Astrocyte of the cerebellum (primary cell): ENCODE measurements at regions of chr17 and their contacts with region 1.

Region 1: DNA sequence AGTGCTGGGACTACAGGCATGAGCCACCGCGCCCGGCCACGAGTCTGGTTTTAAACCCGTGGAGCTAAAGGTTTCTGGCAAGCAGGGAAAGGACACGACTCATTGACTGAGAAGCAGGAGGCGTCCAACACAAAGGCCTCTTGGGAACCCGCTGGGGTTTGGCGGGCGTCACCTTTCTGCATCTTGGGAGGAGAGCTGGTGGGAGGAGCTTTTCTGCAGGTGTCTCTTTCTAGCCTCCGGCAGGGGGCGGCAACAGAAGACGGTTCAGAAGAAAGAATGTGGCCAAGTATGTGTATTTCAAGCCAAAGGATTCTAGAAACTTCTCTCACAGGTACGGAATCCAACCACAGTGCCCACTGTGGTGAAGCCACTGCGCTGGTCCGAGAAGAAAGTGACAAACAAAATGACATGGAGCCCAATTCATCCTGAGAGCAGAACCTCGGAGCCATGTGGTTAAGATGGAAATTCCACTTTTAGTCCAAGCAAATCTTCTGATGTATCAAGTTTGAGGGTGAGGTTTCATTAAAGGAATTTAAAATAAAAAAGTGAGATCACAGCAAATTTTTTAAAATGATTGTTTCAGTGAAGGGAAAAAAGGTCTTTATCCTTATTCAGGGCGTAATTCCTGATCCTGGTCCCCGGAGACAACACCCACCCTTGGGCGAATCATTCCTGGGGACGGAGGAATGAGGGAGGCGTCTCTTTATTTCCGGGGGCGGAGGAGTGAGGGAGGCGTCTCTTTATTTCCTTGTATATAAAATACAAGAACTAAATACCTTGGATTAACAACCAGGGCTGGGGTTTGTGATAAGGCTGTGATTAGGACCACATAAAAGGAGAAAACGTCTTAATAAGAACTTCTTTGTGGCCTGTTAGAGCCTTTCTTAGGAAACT is 97.6 kb downstream of the MRM3 start:
- DNase-seq: peak; percentile 97
- H3K4me3 ChIP-seq: no peak overlapping the region
- CTCF ChIP-seq: peak; percentile 68

Region 2: DNA sequence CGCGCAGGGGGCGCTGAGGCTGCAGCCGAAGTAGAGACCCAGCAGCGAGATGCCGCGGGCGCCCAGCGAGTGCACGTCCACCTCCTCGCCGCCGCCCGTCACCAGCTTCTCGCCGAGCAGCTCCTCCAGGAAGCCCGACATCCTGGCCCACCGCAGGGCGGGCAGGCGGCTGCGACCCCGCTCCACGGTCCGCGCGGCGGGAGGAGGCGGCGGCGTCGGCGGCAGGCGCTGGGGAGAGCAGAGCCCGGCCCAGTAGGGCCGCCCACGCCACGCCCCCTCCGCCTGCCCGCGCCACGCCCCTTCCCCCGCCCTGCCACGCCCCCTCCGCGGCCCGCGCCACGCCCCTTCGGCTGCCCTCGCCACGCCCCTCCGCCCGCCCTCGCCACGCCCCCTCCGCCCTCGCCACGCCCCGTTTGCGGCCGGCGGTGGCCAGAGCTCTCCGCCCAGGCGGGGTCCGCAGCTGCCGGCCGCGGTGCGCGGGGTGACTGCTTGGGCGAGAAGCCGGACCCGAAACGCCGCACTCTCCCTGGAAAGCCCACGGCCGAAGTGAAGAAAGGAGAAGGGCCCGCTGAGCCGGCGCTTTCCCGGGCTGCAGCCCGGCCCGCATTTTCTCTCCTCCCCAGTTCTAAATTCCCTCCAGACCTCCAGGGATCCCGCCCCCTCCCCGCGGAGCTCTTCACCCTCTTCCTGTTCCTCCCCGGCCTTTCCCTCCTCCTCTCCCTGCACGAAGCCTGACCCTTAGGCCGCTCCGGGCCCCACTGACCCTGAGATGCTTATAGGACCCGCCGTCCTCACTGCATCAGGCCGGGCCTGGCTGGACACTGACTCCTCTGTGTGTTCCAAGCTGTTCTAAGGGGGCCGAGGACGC is 100.0 kb after region 1 on chr17 and contains the start of gene NXN:
- in situ Hi-C with region 1: loop called (anchors 10 kb)
- DNase-seq: no peak
- H3K4me3 ChIP-seq: peak within 1 kb of the TSS; percentile 72
- CTCF ChIP-seq: peak; percentile 20